CD4-positive, alpha-beta T cell (primary cell): ENCODE measurements at regions of chr7 and their contacts with region 1.

Region 1: GRCh38 chr7:128343554-128344430 is at the start of gene RBM28:
- DNase-seq: peak; percentile 73 to 94 (median 81)
- ATAC-seq: peak; percentile 94
- H3K4me3 ChIP-seq: peak within 1 kb of the TSS; percentile 73
- H3K4me3 Mint-ChIP-seq: peak within 1 kb of the TSS; percentile 97
- H3K27ac ChIP-seq: peak within 1 kb of the TSS; percentile 75 to 79
- H3K27ac Mint-ChIP-seq: peak within 1 kb of the TSS; percentile 91
- H3K4me1 ChIP-seq: peaks cover 20% of the 10 kb centered on the region
- H3K4me1 Mint-ChIP-seq: peaks cover 48% of the 10 kb centered on the region
- H3K27me3 ChIP-seq: no peaks in the 10 kb centered on the region
- H3K27me3 Mint-ChIP-seq: peaks cover 10% of the 10 kb centered on the region
- CTCF ChIP-seq: no peak
- total RNA-seq, gene RBM28: 10.1 to 10.5 TPM

Region 2: GRCh38 chr7:127651556-127652332 is 692.0 kb before region 1 on chr7 and contains the start of gene SND1:
- CTCF ChIA-PET with region 1: no interaction called
- POLR2A ChIA-PET with region 1: no interaction called
- intact Hi-C with region 1: loop called in 1 of 2 experiments (anchors 5 kb)
- DNase-seq: peak; percentile 95 to 100 (median 98)
- ATAC-seq: peak; percentile 93
- H3K4me3 ChIP-seq: peak within 1 kb of the TSS; percentile 99
- H3K4me3 Mint-ChIP-seq: peak within 1 kb of the TSS; percentile 93
- H3K27ac ChIP-seq: peak within 1 kb of the TSS; percentile 89 to 94
- H3K27ac Mint-ChIP-seq: no peak within 1 kb of the TSS
- H3K4me1 ChIP-seq: peaks cover 43% of the 10 kb centered on the region
- H3K4me1 Mint-ChIP-seq: peaks cover 55% of the 10 kb centered on the region
- H3K27me3 ChIP-seq: no peaks in the 10 kb centered on the region
- H3K27me3 Mint-ChIP-seq: no peaks in the 10 kb centered on the region
- CTCF ChIP-seq: no peak
- total RNA-seq, gene SND1: 104 to 113 TPM

Region 3: GRCh38 chr7:128409596-128410160 is 65.9 kb after region 1 on chr7 and contains the start of gene IMPDH1:
- CTCF ChIA-PET with region 1: interaction called, 8 read pairs
- POLR2A ChIA-PET with region 1: interaction called, 8 read pairs
- intact Hi-C with region 1: loop called in 1 of 2 experiments (anchors 5 kb)
- DNase-seq: peak; percentile 65 to 91 (median 85)
- ATAC-seq: peak; percentile 72
- H3K4me3 ChIP-seq: peak within 1 kb of the TSS; percentile 95
- H3K4me3 Mint-ChIP-seq: peak within 1 kb of the TSS; percentile 92
- H3K27ac ChIP-seq: peak within 1 kb of the TSS; percentile 66 to 85
- H3K27ac Mint-ChIP-seq: peak within 1 kb of the TSS; percentile 86
- H3K4me1 ChIP-seq: peaks cover 52% of the 10 kb centered on the region
- H3K4me1 Mint-ChIP-seq: peaks cover 44% of the 10 kb centered on the region
- H3K27me3 ChIP-seq: no peaks in the 10 kb centered on the region
- H3K27me3 Mint-ChIP-seq: no peaks in the 10 kb centered on the region
- CTCF ChIP-seq: no peak
- total RNA-seq, gene IMPDH1: 26.5 to 27.0 TPM

Region 4: GRCh38 chr7:128455551-128456254 is 111.9 kb after region 1 on chr7 and contains the start of gene HILPDA:
- CTCF ChIA-PET with region 1: interaction called, 5 read pairs
- POLR2A ChIA-PET with region 1: interaction called, 6 read pairs
- intact Hi-C with region 1: loop called in 1 of 2 experiments (anchors 10 kb)
- DNase-seq: peak; percentile 86 to 99 (median 92)
- ATAC-seq: peak; percentile 88
- H3K4me3 ChIP-seq: peak within 1 kb of the TSS; percentile 76
- H3K4me3 Mint-ChIP-seq: peak within 1 kb of the TSS; percentile 90
- H3K27ac ChIP-seq: peak within 1 kb of the TSS; percentile 62 to 67
- H3K27ac Mint-ChIP-seq: peak within 1 kb of the TSS; percentile 88
- H3K4me1 ChIP-seq: peaks cover 28% of the 10 kb centered on the region
- H3K4me1 Mint-ChIP-seq: peaks cover 22% of the 10 kb centered on the region
- H3K27me3 ChIP-seq: no peaks in the 10 kb centered on the region
- H3K27me3 Mint-ChIP-seq: no peaks in the 10 kb centered on the region
- CTCF ChIP-seq: no peak
- total RNA-seq, gene HILPDA: 1.7 TPM

Region 5: GRCh38 chr7:129054438-129055293 is 710.9 kb after region 1 on chr7 and contains the start of gene TNPO3:
- CTCF ChIA-PET with region 1: interaction called, 3 read pairs
- POLR2A ChIA-PET with region 1: no interaction called
- intact Hi-C with region 1: loop called in 1 of 2 experiments (anchors 10 kb)
- DNase-seq: peak; percentile 80 to 94 (median 86)
- ATAC-seq: peak; percentile 87
- H3K4me3 ChIP-seq: peak within 1 kb of the TSS; percentile 88
- H3K4me3 Mint-ChIP-seq: peak within 1 kb of the TSS; percentile 99
- H3K27ac ChIP-seq: peak within 1 kb of the TSS; percentile 91 to 98
- H3K27ac Mint-ChIP-seq: peak within 1 kb of the TSS; percentile 96
- H3K4me1 ChIP-seq: peaks cover 25% of the 10 kb centered on the region
- H3K4me1 Mint-ChIP-seq: peaks cover 49% of the 10 kb centered on the region
- H3K27me3 ChIP-seq: peaks cover 0 to 4% of the 10 kb centered on the region in 2 experiments
- H3K27me3 Mint-ChIP-seq: no peaks in the 10 kb centered on the region
- CTCF ChIP-seq: no peak
- total RNA-seq, gene TNPO3: 17.1 to 18.7 TPM

Region 6: DNA sequence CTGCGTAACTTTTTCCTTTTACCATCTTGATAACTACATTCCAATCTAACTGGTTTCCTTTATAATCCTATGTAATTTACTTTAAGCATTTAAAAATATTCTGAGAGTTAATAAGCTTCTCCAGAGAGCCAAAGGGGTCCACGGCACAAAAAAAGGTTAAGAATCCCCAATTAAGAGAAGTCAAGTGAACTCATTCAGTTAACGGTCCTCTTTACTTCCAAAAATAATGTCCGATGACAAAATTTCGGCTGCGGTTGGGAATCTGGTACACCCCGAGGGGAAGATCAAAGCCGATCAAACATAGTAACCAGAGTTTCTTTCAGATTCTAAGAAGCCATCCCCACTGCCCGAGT is 1707.0 kb after region 1 on chr7:
- CTCF ChIA-PET with region 1: no interaction called
- POLR2A ChIA-PET with region 1: interaction called, 4 read pairs
- intact Hi-C with region 1: loop called (anchors 5 kb)
- DNase-seq: no peak
- ATAC-seq: no peak
- H3K4me3 ChIP-seq: peak overlapping the region; percentile 85
- H3K4me3 Mint-ChIP-seq: peak overlapping the region; percentile 98
- H3K27ac ChIP-seq: peak overlapping the region; percentile 29 to 45
- H3K27ac Mint-ChIP-seq: peak overlapping the region; percentile 81
- H3K4me1 ChIP-seq: peaks cover 15% of the 10 kb centered on the region
- H3K4me1 Mint-ChIP-seq: peaks cover 10% of the 10 kb centered on the region
- H3K27me3 ChIP-seq: no peaks in the 10 kb centered on the region
- H3K27me3 Mint-ChIP-seq: no peaks in the 10 kb centered on the region
- CTCF ChIP-seq: no peak